WTC11 (cell line): ENCODE measurements at regions of chr2 and their contacts with region 1.

Region 1: GRCh38 chr2:21042958-21043743 is 722 bp downstream of the APOB start:
- DNase-seq: peak; percentile 81
- ATAC-seq: peak; percentile 45
- H3K4me3 Mint-ChIP-seq: peak overlapping the region; percentile 94
- H3K27ac Mint-ChIP-seq: no peak overlapping the region
- H3K4me1 Mint-ChIP-seq: peaks cover 40% of the 10 kb centered on the region
- H3K27me3 Mint-ChIP-seq: peaks cover 16% of the 10 kb centered on the region
- CTCF ChIP-seq: peak; percentile 98

Region 2: GRCh38 chr2:21059885-21060610 is 16.9 kb after region 1 on chr2:
- CTCF ChIA-PET with region 1: no interaction called
- POLR2A ChIA-PET with region 1: no interaction called
- DNase-seq: no peak
- ATAC-seq: no peak
- H3K4me3 Mint-ChIP-seq: no peak overlapping the region
- H3K27ac Mint-ChIP-seq: no peak overlapping the region
- H3K4me1 Mint-ChIP-seq: no peaks in the 10 kb centered on the region
- H3K27me3 Mint-ChIP-seq: no peaks in the 10 kb centered on the region
- CTCF ChIP-seq: no peak

Region 3: GRCh38 chr2:21083482-21083881 is 40.3 kb after region 1 on chr2:
- CTCF ChIA-PET with region 1: no interaction called
- POLR2A ChIA-PET with region 1: no interaction called
- DNase-seq: no peak
- ATAC-seq: no peak
- H3K4me3 Mint-ChIP-seq: no peak overlapping the region
- H3K27ac Mint-ChIP-seq: no peak overlapping the region
- H3K4me1 Mint-ChIP-seq: no peaks in the 10 kb centered on the region
- H3K27me3 Mint-ChIP-seq: no peaks in the 10 kb centered on the region
- CTCF ChIP-seq: no peak

Region 4: GRCh38 chr2:21118302-21118920 is 75.3 kb after region 1 on chr2:
- CTCF ChIA-PET with region 1: interaction called, 42 read pairs
- POLR2A ChIA-PET with region 1: no interaction called
- DNase-seq: peak; percentile 29
- ATAC-seq: peak; percentile 80
- H3K4me3 Mint-ChIP-seq: no peak overlapping the region
- H3K27ac Mint-ChIP-seq: no peak overlapping the region
- H3K4me1 Mint-ChIP-seq: no peaks in the 10 kb centered on the region
- H3K27me3 Mint-ChIP-seq: no peaks in the 10 kb centered on the region
- CTCF ChIP-seq: no peak

Region 5: GRCh38 chr2:21165350-21165749 is 122.2 kb after region 1 on chr2:
- CTCF ChIA-PET with region 1: interaction called, 10 read pairs
- POLR2A ChIA-PET with region 1: no interaction called
- DNase-seq: no peak
- ATAC-seq: no peak
- H3K4me3 Mint-ChIP-seq: no peak overlapping the region
- H3K27ac Mint-ChIP-seq: no peak overlapping the region
- H3K4me1 Mint-ChIP-seq: no peaks in the 10 kb centered on the region
- H3K27me3 Mint-ChIP-seq: no peaks in the 10 kb centered on the region
- CTCF ChIP-seq: no peak